ENCODE measurements at regions of chr1 and their contacts with region 1.

Region 1: GRCh38 chr1:84603941-84604830 is 29.9 kb upstream of the CTBS start:
- DNase-seq: peak in 3 of 5 donors; percentile 52 to 68 (median 57)
- ATAC-seq: peak; percentile 83 to 91 (median 90)
- H3K4me3 ChIP-seq: peak overlapping the region in 10 of 12 donors; percentile 18 to 57 (median 37)
- H3K27ac ChIP-seq: peak overlapping the region; percentile 4 to 78 (median 58)
- H3K4me1 ChIP-seq: peaks cover 0 to 28% (median 16%) of the 10 kb centered on the region in 12 donors
- H3K27me3 ChIP-seq: no peaks in the 10 kb centered on the region
- CTCF ChIP-seq: peak; percentile 38 to 87 (median 72)
- POLR2A ChIP-seq: no peak

Region 2: DNA sequence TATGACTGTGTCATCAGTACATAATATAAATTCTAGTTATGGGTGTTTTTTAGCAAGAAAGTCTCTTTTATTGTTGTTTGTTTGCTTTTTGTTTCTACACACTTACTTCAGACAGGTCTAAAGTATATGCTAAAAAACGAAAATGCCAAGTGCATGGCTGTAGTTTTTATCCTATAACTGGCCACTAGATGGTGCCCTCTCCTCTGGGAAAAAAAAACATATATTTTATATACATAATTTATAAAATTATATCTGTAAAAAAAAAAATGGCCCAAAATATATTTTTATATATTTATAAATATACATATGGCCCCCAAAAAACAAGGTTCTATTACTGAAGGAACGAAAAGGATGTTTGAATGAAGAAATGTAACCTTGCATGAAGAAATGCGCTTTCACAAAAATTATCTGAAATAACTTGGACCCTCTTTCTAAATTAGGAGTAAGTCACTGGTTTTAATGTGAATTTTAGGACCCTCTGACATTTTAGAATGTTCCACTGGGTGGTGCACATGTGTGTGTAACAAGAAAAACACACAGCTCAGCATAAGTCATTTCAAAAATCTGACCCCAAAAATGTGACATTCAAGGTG is 698.8 kb before region 1 on chr1:
- intact Hi-C with region 1: loop called in 2 of 10 experiments (anchors 10 kb)
- DNase-seq: no peak
- ATAC-seq: no peak
- H3K4me3 ChIP-seq: no peak overlapping the region
- H3K27ac ChIP-seq: no peak overlapping the region
- H3K4me1 ChIP-seq: peaks cover 0 to 3% (median 0%) of the 10 kb centered on the region in 12 donors
- H3K27me3 ChIP-seq: no peaks in the 10 kb centered on the region
- CTCF ChIP-seq: peak; percentile 50 to 78 (median 64)
- POLR2A ChIP-seq: no peak

Region 3: DNA sequence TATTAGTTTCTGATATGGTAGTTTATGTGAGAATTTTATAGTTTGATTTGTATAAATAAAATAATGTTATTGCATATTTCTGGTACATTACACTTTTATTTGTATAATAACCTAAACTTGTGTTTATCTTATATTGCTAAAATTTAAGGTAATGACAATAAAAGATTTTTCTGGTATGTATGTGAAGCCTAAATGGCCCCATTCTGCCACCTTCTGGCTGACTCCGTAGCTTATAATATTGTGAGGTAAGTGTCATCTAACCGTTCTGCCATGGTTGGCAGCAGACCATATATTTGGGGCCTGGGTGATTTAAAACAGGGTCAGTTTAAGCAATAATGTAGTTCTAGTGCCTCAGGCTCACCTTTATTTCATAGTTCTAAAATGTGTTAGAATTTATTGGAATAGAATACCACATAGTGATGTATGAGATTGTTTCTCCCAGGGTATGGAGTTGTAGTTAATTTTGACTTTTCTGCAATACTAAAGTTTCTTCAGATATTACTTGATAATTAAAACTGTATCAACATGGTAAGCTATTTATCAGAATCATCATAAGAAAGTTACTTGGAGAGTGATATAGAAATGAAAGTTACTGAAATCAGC is 481.3 kb before region 1 on chr1:
- intact Hi-C with region 1: loop called in 1 of 10 experiments (anchors 10 kb)
- DNase-seq: peak in 4 of 5 donors; percentile 15 to 32 (median 31)
- ATAC-seq: peak; percentile 45 to 78 (median 48)
- H3K4me3 ChIP-seq: no peak overlapping the region
- H3K27ac ChIP-seq: no peak overlapping the region
- H3K4me1 ChIP-seq: peaks cover 0 to 21% (median 0%) of the 10 kb centered on the region in 12 donors
- H3K27me3 ChIP-seq: no peaks in the 10 kb centered on the region
- CTCF ChIP-seq: peak; percentile 34 to 74 (median 61)
- POLR2A ChIP-seq: no peak

Region 4: DNA sequence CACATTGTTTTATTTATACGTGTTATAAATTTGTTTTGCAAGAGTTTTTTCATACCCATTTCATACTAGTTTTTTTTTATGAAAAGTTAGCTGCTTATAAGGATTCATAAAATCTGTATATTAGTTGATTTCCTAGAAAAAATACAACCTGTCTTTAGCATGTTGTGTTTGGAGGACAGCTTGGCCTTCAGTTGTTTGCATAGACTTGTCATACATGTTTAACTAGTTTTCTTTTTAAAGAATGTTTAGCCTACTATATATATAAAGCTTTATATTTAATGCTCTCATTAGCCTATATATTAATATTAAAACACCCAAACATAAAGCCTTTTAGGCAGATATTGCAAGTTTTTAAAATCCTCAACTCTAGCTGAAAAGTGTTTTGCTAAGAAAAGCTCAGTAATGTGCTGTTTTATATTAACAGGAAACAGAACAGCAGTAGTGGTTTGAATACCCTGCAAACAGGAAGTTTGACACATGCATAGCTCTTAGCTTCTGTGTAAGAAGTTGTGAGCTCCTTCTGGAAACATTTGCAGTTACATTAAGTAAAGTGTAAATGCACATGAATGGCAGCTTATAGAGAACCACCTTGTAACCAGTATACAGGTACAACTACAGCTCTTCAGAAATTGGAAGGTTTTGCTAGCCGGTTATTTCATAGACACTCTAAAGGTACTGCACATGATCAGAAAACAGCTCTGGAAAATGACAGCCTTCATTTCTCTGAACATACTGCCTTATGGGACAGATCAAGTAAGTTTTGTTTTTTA is 460.2 kb before region 1 on chr1 and contains the start of gene PRKACB:
- intact Hi-C with region 1: loop called in 5 of 10 experiments (anchors 10 kb)
- DNase-seq: no peak
- ATAC-seq: peak in 3 of 4 donors; percentile 56 to 67 (median 64)
- H3K4me3 ChIP-seq: peak within 1 kb of the TSS in 6 of 12 donors; percentile 0 to 52 (median 24)
- H3K27ac ChIP-seq: peak within 1 kb of the TSS in 1 of 12 donors; percentile 87
- H3K4me1 ChIP-seq: peaks cover 0 to 26% (median 0%) of the 10 kb centered on the region in 12 donors
- H3K27me3 ChIP-seq: no peaks in the 10 kb centered on the region
- CTCF ChIP-seq: no peak
- POLR2A ChIP-seq: no peak
- total RNA-seq, gene PRKACB: 16.6 to 52.3 (median 41.1) TPM

Region 5: DNA sequence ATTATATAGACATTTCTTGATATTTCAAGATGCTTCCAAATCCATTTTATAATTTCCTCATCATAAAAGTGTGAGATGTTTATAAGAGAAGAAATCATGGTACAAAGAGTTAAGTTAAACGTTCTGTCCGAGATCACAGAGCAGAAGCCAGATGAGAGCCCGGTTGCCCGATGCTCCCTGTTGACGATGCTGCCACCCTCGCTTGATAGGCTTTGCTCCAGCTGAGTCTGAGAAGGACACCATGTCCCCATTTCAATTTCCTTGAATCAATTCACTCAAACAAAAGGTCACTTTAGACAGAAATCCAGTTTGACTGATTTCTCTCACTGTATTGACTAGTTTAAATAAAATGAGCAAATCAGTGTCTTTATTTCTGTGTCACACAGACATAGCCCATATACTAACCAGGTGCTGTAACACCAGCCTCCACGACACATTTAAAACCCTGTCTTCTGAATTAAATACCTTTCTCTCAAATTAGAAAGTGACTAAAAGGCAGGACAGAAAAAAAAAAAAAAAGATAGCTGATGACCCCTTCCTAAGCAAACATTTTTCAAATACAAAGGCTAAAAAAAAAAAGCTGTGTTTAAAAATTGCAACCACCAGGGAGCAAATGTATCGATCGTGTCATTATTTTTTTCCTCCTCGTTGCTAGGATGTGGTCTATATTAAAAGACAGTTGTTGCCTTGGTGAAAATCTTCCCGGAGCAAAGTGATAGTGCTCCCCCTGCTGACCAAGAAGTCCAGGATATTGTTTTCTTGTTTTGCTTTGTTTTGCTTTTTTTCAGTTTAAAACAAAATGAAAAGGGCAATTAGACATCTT is 170.7 kb before region 1 on chr1:
- intact Hi-C with region 1: loop called in 3 of 10 experiments (anchors 5 to 10 kb)
- DNase-seq: peak in 3 of 5 donors; percentile 29 to 41 (median 40)
- ATAC-seq: peak; percentile 69 to 86 (median 75)
- H3K4me3 ChIP-seq: peak overlapping the region in 10 of 12 donors; percentile 17 to 45 (median 34)
- H3K27ac ChIP-seq: no peak overlapping the region
- H3K4me1 ChIP-seq: peaks cover 0 to 47% (median 6%) of the 10 kb centered on the region in 12 donors
- H3K27me3 ChIP-seq: no peaks in the 10 kb centered on the region
- CTCF ChIP-seq: peak; percentile 53 to 82 (median 72)
- POLR2A ChIP-seq: no peak

Region 6: DNA sequence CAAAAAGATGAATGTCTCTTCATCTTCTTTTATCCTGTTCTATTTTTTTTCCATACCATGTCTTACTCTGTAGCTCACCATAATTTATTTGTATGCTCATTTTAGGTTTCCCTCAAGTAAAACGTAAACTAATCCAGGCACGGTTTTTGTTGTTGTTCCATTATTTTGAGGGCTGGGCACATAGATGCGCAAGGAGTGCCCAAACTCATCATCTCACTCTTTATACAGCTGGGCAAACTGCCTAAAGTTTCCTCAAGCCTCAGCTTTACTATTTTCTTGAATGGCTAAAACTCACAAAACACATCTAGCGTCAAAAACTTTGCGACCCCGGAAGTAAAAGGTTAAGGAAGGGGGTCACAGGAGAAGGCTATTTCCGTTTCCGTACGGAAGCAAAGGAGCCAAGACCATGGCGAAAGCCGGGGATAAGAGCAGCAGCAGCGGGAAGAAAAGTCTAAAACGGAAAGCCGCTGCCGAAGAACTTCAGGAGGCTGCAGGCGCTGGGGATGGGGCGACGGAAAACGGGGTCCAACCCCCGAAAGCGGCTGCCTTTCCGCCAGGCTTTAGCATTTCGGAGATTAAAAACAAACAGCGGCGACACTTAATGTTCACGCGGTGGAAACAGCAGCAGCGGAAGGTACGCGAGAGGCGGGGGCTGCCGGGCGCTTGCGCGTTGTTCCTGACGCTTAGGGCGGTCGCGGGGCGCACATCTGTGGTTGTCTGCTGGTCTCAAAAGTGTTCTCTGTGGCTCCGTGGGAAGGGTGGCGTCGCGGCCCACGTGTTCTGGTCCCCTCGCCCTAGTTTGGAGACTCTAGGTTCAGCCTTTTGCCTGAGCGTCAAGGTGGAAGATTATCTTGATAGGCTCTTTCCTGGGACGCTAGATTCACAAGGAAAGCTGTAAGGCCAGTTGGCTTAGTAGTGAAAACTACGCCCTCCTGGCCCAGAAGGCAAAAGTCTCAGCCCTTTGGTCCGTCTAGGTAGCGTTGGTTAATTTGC is 125.0 kb before region 1 on chr1 and contains the start of gene RPF1:
- intact Hi-C with region 1: loop called in 1 of 10 experiments (anchors 10 kb)
- DNase-seq: peak; percentile 66 to 87 (median 74)
- ATAC-seq: peak; percentile 92 to 98 (median 96)
- H3K4me3 ChIP-seq: peak within 1 kb of the TSS; percentile 45 to 88 (median 79)
- H3K27ac ChIP-seq: peak within 1 kb of the TSS; percentile 70 to 96 (median 84)
- H3K4me1 ChIP-seq: peaks cover 0 to 32% (median 20%) of the 10 kb centered on the region in 12 donors
- H3K27me3 ChIP-seq: peaks cover 0 to 38% (median 8%) of the 10 kb centered on the region in 9 donors
- CTCF ChIP-seq: no peak
- POLR2A ChIP-seq: peak; percentile 40 to 59
- total RNA-seq, gene RPF1: 30.3 to 63.9 (median 34.5) TPM

Measured in heart left ventricle (tissue), 16 donors.